Pancreas (tissue), 10 donors: ENCODE measurements at regions of chr11 and their contacts with region 1.

Region 1: DNA sequence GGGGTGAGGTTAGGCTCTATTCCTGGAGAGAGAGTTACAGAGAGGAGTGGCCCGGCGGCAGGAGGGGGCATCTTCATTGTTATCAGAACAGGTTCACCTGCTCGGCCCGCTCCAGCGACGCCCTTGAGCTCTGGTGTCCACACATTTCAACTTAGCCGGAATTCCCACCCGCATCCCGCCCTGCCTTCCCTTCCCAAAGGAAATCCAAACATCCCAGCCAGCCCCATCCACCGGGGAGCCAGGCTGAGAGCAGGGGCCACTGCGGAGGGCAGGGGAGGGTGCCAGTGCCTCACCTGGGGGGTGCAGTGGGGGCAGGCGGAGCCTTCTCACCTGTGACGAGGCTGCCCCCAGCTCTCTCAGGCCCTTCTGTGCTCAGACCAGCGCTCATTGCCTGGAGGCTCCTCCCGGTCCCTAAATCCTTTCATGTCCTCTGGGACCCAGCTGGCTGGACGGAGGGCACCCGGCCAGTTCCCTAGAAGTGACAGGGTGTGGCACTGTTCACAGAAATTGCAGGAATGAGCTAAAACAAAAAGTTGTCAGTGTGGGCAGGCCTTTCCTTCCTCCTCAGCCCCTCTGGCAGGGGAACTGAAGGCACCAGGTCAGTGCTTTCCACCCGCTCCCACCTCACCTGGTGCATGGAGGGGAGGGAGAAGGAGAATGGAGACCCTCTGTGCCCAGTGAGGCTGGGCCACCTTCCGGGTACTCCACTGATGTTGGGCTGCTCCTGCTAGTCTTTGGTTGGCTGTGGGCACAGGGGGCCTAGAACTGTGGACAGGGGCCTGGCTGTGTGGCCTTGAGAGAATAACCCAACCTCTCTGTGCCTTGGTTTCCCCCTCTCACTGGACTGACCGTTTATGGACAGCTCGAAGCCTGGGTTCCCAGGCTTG is 2.2 kb upstream of the MRGPRG start:
- DNase-seq: peak in 3 of 6 donors; percentile 5 to 47 (median 42)
- ATAC-seq: no peak
- H3K4me3 ChIP-seq: no peak overlapping the region
- H3K27ac ChIP-seq: no peak overlapping the region
- H3K4me1 ChIP-seq: no peaks in the 10 kb centered on the region
- H3K27me3 ChIP-seq: peaks cover 0 to 5% (median 0%) of the 10 kb centered on the region in 4 donors
- CTCF ChIP-seq: no peak

Region 2: GRCh38 chr11:3037040-3037944 is 183.5 kb before region 1 on chr11:
- intact Hi-C with region 1: loop called in 1 of 3 experiments (anchors 5 kb)
- DNase-seq: peak; percentile 56 to 90 (median 74)
- ATAC-seq: peak; percentile 76 to 93 (median 90)
- H3K4me3 ChIP-seq: no peak overlapping the region
- H3K27ac ChIP-seq: no peak overlapping the region
- H3K4me1 ChIP-seq: no peaks in the 10 kb centered on the region
- H3K27me3 ChIP-seq: no peaks in the 10 kb centered on the region
- CTCF ChIP-seq: peak; percentile 46 to 72 (median 54)

Region 3: DNA sequence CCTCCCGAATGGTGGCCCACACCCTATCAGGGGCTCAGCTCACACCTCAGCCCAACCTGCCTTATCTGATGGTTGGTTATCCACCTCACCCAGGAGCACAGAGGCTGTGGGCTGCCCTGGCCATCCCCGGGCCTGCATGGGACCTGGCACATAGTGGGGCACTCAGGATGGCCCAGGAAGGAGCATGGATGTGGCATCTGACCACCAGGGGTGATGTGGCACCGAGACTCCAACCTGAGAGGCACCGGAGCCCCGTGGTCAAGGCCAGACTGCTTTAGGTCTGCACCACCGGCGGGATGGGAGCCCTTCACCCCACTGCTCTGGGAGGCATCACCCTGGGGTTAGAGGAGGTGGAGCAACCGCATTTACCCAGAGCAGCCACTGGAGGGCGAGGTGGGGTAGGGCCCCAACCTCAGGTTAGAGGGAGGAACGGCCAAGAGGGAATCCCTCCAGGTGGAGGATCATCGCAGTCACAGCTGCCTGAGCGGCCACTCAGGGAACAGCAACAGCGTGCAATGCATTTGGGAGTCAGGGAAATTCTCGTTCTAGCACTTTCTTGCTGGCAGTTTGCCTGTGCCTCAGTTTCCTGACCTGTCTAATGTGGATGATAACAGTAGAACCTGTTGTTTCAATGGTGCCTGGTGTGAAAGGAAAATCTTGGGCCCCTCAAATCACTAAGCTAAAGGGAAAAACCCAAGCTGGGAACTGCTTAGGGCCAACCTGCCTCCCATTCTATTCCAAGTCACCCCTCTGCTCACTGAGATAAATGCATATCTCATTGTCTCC is 110.7 kb before region 1 on chr11:
- intact Hi-C with region 1: loop called in 2 of 3 experiments (anchors 10 kb)
- DNase-seq: peak in 4 of 6 donors; percentile 44 to 74 (median 62)
- ATAC-seq: peak; percentile 66 to 92 (median 80)
- H3K4me3 ChIP-seq: no peak overlapping the region
- H3K27ac ChIP-seq: no peak overlapping the region
- H3K4me1 ChIP-seq: no peaks in the 10 kb centered on the region
- H3K27me3 ChIP-seq: no peaks in the 10 kb centered on the region
- CTCF ChIP-seq: peak in 3 of 4 donors; percentile 31 to 47 (median 40)

Region 4: GRCh38 chr11:3160252-3161031 is 60.3 kb before region 1 on chr11:
- intact Hi-C with region 1: loop called in 1 of 3 experiments (anchors 10 kb)
- DNase-seq: peak; percentile 77 to 92 (median 84)
- ATAC-seq: peak; percentile 82 to 91 (median 87)
- H3K4me3 ChIP-seq: peak overlapping the region; percentile 2 to 45 (median 16)
- H3K27ac ChIP-seq: peak overlapping the region in 1 of 4 donors; percentile 37
- H3K4me1 ChIP-seq: peaks cover 0 to 18% (median 7%) of the 10 kb centered on the region in 3 donors
- H3K27me3 ChIP-seq: no peaks in the 10 kb centered on the region
- CTCF ChIP-seq: no peak